Common myeloid progenitor, CD34-positive (primary cell): ENCODE measurements at regions of chr5 and their contacts with region 1.

Region 1: DNA sequence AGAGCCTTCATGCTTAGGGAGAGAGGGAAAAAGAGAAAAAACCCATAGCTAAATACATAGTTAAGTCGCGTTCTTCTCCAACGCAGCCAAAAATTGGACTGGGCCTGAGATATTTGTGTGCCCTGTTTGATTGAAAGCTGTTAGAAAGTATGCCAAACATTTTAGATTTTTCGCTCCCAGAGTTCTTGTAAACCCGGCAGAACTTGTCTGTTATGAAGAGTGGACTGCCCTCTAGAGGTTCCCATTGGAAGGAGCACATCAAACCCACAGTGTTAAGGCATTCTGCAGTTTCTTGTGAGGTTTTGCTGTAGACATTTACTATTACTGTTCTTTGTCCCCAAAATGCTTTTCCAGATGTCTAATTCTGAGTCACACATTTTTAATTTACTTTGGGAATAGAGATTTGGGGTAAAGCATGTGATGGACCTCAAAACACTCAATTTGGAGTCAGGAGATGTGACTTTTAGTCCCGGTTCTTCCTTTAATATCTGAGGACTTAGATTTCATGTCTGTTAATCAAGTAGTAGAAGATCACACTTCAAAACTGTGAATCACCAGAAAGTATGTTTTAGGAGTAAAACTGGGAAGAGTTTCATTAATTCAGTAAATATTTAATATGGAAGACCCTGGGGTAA is 96.6 kb downstream of the PCSK1 start:
- DNase-seq: peak; percentile 83 to 92 (median 89)
- H3K4me3 ChIP-seq: peak overlapping the region in 1 of 7 experiments; percentile 31
- H3K27ac ChIP-seq: no peak overlapping the region
- H3K4me1 ChIP-seq: peaks cover 5 to 27% (median 13%) of the 10 kb centered on the region in 4 experiments
- H3K27me3 ChIP-seq: no peaks in the 10 kb centered on the region

Region 2: GRCh38 chr5:95853490-95853889 is 483.0 kb before region 1 on chr5:
- CTCF ChIA-PET with region 1: interaction called, 52 read pairs
- POLR2A ChIA-PET with region 1: no interaction called
- DNase-seq: no peak
- H3K4me3 ChIP-seq: no peak overlapping the region
- H3K27ac ChIP-seq: no peak overlapping the region
- H3K4me1 ChIP-seq: peaks cover 0 to 3% (median 1%) of the 10 kb centered on the region in 4 experiments
- H3K27me3 ChIP-seq: no peaks in the 10 kb centered on the region

Region 3: GRCh38 chr5:95892780-95893354 is 443.6 kb before region 1 on chr5:
- CTCF ChIA-PET with region 1: interaction called, 70 read pairs
- POLR2A ChIA-PET with region 1: no interaction called
- DNase-seq: peak; percentile 48 to 70 (median 69)
- H3K4me3 ChIP-seq: no peak overlapping the region
- H3K27ac ChIP-seq: no peak overlapping the region
- H3K4me1 ChIP-seq: no peaks in the 10 kb centered on the region
- H3K27me3 ChIP-seq: no peaks in the 10 kb centered on the region

Region 4: GRCh38 chr5:95961617-95962474 is 374.6 kb before region 1 on chr5 and contains the start of gene ELL2:
- CTCF ChIA-PET with region 1: interaction called, 13 read pairs
- POLR2A ChIA-PET with region 1: no interaction called
- DNase-seq: peak; percentile 99
- H3K4me3 ChIP-seq: peak within 1 kb of the TSS; percentile 78 to 95 (median 84)
- H3K27ac ChIP-seq: peak within 1 kb of the TSS; percentile 52 to 82
- H3K4me1 ChIP-seq: peaks cover 4 to 26% (median 16%) of the 10 kb centered on the region in 4 experiments
- H3K27me3 ChIP-seq: peaks cover 0 to 13% (median 0%) of the 10 kb centered on the region in 5 experiments

Region 5: DNA sequence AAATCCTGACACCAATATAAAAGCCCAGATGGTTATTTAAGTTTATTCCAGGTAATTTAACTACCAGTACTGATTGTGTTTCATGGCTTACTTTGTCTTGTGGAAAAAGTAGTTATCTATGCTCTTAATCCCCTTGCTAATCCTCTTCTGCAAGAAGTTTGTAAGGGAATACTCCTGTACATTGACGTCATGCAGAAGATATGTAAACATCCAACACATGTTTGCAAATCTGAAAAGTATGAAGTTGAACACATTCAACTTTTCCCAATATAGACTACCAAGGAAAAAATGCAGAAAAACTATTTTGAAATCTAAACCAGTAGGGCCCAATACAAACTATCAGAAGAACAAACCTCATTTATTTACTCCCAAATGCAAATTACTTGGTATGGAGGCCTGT is 318.5 kb before region 1 on chr5:
- CTCF ChIA-PET with region 1: no interaction called
- POLR2A ChIA-PET with region 1: no interaction called
- DNase-seq: no peak
- H3K4me3 ChIP-seq: no peak overlapping the region
- H3K27ac ChIP-seq: no peak overlapping the region
- H3K4me1 ChIP-seq: no peaks in the 10 kb centered on the region
- H3K27me3 ChIP-seq: no peaks in the 10 kb centered on the region

Region 6: GRCh38 chr5:96601811-96602244 is 265.4 kb after region 1 on chr5:
- CTCF ChIA-PET with region 1: interaction called, 11 read pairs
- POLR2A ChIA-PET with region 1: no interaction called
- DNase-seq: peak; percentile 59 to 78 (median 67)
- H3K4me3 ChIP-seq: no peak overlapping the region
- H3K27ac ChIP-seq: no peak overlapping the region
- H3K4me1 ChIP-seq: no peaks in the 10 kb centered on the region
- H3K27me3 ChIP-seq: peaks cover 0 to 5% (median 2%) of the 10 kb centered on the region in 5 experiments